Caco-2 (cell line): ENCODE measurements at regions of chr6 and their contacts with region 1.

Region 1: DNA sequence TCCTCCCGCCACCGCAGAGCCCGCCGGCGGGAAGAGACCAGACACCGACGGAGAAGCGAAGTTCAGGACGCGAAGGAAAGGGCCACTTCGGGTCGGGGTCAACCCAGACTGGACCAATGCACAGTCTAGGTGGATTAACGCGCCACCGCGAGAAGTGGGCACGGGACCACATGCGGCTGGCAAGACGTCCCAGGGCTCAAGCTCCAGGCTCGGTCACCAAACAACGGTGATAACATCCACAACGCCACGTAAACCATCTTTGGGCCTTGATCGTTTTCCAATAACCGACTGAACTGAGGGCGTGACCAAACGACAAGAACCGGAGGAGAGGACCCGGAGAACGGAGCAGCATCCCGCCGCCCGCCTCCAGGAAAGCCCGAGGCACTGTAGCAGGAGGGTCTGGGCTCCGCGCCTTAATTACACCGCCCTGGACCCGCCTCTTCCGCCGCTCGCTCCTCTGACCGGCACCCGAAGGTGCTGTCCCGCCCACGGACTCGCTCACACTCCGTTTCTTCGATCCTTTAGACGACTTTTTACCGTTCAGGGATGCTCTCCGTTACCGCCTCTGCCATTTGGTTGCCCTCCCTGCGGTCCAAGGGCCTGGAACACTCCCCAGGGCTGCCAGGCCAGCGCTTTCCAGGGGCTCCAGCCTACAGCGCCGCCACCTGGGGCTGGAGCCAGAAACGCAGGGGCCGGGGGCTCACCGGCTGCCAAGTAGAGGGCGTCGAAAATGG is 44.1 kb downstream of the DPPA5 start:
- DNase-seq: peak; percentile 74 to 77
- H3K4me3 ChIP-seq: peak overlapping the region; percentile 52
- H3K4me3 Mint-ChIP-seq: peak overlapping the region; percentile 100
- H3K27ac Mint-ChIP-seq: peak overlapping the region; percentile 98
- H3K4me1 ChIP-seq: peaks cover 5% of the 10 kb centered on the region; the same call in 1 of the 2 replicates
- H3K4me1 Mint-ChIP-seq: peaks cover 15% of the 10 kb centered on the region
- H3K27me3 ChIP-seq: no peaks in the 10 kb centered on the region
- H3K27me3 Mint-ChIP-seq: no peaks in the 10 kb centered on the region
- CTCF ChIP-seq: peak; percentile 40 to 87

Region 2: GRCh38 chr6:73180763-73181619 is 128.9 kb before region 1 on chr6:
- CTCF ChIA-PET with region 1: no interaction called
- POLR2A ChIA-PET with region 1: no interaction called
- intact Hi-C with region 1: no loop called
- DNase-seq: peak in 1 of 2 experiments; percentile 17
- H3K4me3 ChIP-seq: no peak overlapping the region
- H3K4me3 Mint-ChIP-seq: no peak overlapping the region
- H3K27ac Mint-ChIP-seq: no peak overlapping the region
- H3K4me1 ChIP-seq: no peaks in the 10 kb centered on the region
- H3K4me1 Mint-ChIP-seq: no peaks in the 10 kb centered on the region
- H3K27me3 ChIP-seq: no peaks in the 10 kb centered on the region
- H3K27me3 Mint-ChIP-seq: peaks cover 4% of the 10 kb centered on the region
- CTCF ChIP-seq: peak; percentile 58 to 86

Region 3: DNA sequence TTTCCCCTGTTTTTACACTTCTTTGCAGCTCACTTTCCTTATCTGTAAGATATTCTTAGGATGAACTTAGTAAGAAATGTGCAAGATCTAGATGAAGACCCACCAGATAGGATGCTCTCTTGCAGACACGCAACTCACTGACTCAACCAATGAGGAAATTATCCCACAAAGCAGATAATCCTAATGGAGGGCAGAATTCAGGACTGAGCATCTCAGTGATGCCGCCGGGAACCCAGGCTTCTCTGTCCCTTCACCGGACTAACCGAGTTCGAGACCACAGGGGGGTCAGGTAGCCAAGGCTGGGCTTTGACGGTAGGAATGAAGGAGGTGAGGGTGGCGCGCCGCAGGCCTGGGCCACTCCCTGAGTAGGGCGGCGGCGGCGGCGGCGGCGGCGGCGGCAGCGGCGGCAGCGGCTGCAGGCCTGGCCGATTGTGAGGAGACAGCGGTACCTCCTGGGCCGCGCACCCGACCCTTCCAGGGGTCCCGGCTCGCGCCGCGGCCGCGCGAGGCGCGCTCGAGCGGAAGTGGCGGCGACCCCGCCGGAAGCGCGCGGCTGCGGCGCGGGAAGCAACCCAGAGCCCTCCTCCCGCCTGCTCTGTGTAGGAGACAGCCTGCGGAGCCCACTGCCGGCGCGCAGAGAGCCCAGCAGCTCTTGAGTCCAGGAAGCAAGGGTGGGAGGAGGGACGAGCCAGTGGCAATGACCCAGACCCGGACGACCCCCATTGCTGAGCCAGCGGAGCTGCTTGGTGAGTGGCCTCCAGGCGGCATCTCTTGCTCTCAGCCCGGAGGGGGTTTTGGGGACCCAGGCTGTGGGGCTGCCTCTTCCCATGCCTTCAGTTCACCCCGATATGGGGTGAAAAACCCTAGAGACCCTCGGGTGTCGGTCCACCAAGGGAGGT is 47.0 kb before region 1 on chr6 and contains the start of gene KHDC1:
- CTCF ChIA-PET with region 1: no interaction called
- POLR2A ChIA-PET with region 1: interaction called, 4 read pairs
- intact Hi-C with region 1: loop called (anchors 2 kb)
- DNase-seq: peak; percentile 62 to 66
- H3K4me3 ChIP-seq: peak within 1 kb of the TSS; percentile 78
- H3K4me3 Mint-ChIP-seq: peak within 1 kb of the TSS; percentile 76
- H3K27ac Mint-ChIP-seq: peak within 1 kb of the TSS; percentile 5
- H3K4me1 ChIP-seq: peaks cover 16% of the 10 kb centered on the region
- H3K4me1 Mint-ChIP-seq: peaks cover 7% of the 10 kb centered on the region
- H3K27me3 ChIP-seq: no peaks in the 10 kb centered on the region
- H3K27me3 Mint-ChIP-seq: no peaks in the 10 kb centered on the region
- CTCF ChIP-seq: no peak
- total RNA-seq, gene KHDC1: 8.1 and 8.6 TPM in 2 replicates

Region 4: DNA sequence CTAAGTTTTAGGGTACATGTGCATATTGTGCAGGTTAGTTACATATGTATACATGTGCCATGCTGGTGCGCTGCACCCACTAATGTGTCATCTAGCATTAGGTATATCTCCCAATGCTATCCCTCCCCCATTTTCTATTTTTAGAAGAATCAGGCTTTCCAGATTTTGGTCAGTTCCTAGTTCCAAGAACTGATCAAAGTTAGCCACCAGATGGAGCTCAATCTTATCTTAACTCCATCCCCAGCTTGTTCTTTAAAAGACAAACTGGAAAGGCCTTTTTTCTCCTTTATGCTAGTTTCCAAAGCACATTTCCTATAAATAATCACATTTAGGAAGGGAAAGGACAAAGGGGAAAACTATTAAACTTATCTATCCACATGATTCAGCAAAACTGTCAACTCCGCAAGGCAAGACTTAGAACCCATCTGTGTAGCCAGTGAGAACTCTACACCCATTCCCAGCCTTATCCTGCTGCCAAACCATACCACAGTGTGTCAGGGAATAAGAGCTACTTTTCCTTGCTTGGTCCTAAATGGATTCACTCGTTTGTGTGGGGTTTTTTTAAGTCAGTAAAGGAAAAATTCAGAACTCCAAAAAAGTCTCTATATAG is 24.2 kb before region 1 on chr6:
- CTCF ChIA-PET with region 1: interaction called, 29 read pairs
- POLR2A ChIA-PET with region 1: interaction called, 3 read pairs
- intact Hi-C with region 1: loop called (anchors 1 kb)
- DNase-seq: peak in 1 of 2 experiments; percentile 42
- H3K4me3 ChIP-seq: no peak overlapping the region
- H3K4me3 Mint-ChIP-seq: no peak overlapping the region
- H3K27ac Mint-ChIP-seq: no peak overlapping the region
- H3K4me1 ChIP-seq: peaks cover 23% of the 10 kb centered on the region; the same call in 1 of the 2 replicates
- H3K4me1 Mint-ChIP-seq: peaks cover 9% of the 10 kb centered on the region
- H3K27me3 ChIP-seq: no peaks in the 10 kb centered on the region
- H3K27me3 Mint-ChIP-seq: no peaks in the 10 kb centered on the region
- CTCF ChIP-seq: peak; percentile 19 to 56

Region 5: GRCh38 chr6:73375216-73375615 is 65.3 kb after region 1 on chr6:
- CTCF ChIA-PET with region 1: no interaction called
- POLR2A ChIA-PET with region 1: no interaction called
- intact Hi-C with region 1: loop called (anchors 2 kb)
- DNase-seq: peak; percentile 62 to 63
- H3K4me3 ChIP-seq: no peak overlapping the region
- H3K4me3 Mint-ChIP-seq: no peak overlapping the region
- H3K27ac Mint-ChIP-seq: no peak overlapping the region
- H3K4me1 ChIP-seq: peaks cover 8% of the 10 kb centered on the region
- H3K4me1 Mint-ChIP-seq: no peaks in the 10 kb centered on the region
- H3K27me3 ChIP-seq: no peaks in the 10 kb centered on the region
- H3K27me3 Mint-ChIP-seq: no peaks in the 10 kb centered on the region
- CTCF ChIP-seq: no peak

Region 6: DNA sequence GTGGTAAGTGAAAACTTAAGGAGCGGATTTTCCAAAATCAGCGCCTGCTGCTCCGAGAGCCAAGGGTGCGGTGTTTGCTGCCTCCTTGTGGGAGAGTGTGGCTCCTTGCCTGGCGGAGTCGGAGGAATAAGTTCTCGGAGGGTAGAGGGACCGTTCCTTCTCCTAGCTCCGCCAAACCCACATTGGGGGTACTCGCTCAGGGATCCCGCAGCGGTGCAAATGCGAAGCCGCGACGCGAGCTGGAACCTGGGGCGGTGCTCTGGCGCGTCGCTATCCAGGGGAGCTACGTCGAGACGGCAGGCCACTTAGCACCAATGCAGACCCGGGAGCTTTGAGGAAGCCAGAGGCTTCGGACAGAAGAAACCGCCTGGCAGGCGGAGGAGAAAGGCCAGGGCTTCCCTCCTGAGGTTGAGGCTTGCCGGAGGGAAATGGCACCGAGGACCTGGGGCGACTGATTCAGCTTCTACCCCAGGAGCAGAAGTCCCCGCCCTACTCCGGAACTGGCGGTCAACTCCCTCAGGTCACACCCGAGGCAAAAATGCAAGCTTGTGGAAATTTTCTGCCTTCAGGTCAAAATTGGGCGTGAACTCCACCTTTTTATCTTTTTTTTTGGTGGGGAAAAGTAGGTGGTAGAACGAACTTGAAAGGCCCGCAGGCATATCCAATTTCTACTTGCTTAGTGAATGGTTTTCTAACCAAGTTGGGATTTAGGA is 79.0 kb after region 1 on chr6:
- CTCF ChIA-PET with region 1: interaction called, 11 read pairs
- POLR2A ChIA-PET with region 1: interaction called, 7 read pairs
- intact Hi-C with region 1: no loop called
- DNase-seq: peak; percentile 80 to 85
- H3K4me3 ChIP-seq: peak overlapping the region; percentile 63
- H3K4me3 Mint-ChIP-seq: peak overlapping the region; percentile 87
- H3K27ac Mint-ChIP-seq: peak overlapping the region; percentile 90
- H3K4me1 ChIP-seq: no peaks in the 10 kb centered on the region
- H3K4me1 Mint-ChIP-seq: no peaks in the 10 kb centered on the region
- H3K27me3 ChIP-seq: no peaks in the 10 kb centered on the region
- H3K27me3 Mint-ChIP-seq: no peaks in the 10 kb centered on the region
- CTCF ChIP-seq: peak; percentile 79 to 81

Region 7: DNA sequence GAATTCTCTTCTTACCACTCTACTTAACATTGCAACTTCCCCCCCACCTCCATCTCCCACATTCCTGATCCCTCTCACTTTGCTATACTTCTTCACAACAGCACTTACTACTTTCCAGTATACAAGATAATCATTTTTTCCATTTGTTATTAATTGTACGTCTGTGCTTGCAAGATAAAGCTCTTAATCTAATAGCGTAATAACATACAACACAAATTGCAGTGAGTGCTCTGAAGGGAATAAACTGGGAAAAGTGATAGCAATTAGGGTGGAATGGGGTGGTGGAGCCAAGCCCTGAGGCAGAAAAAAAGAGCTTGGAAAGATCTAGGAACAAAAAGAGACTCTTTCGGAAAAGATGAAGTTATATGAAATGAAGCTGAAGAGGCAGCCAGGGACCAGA is 133.6 kb after region 1 on chr6:
- CTCF ChIA-PET with region 1: no interaction called
- POLR2A ChIA-PET with region 1: no interaction called
- intact Hi-C with region 1: no loop called
- DNase-seq: no peak
- H3K4me3 ChIP-seq: no peak overlapping the region
- H3K4me3 Mint-ChIP-seq: no peak overlapping the region
- H3K27ac Mint-ChIP-seq: no peak overlapping the region
- H3K4me1 ChIP-seq: no peaks in the 10 kb centered on the region
- H3K4me1 Mint-ChIP-seq: peaks cover 5% of the 10 kb centered on the region
- H3K27me3 ChIP-seq: no peaks in the 10 kb centered on the region
- H3K27me3 Mint-ChIP-seq: no peaks in the 10 kb centered on the region
- CTCF ChIP-seq: no peak